IMR-90 (cell line): ENCODE measurements at regions of chr11 and their contacts with region 1.

Region 1: DNA sequence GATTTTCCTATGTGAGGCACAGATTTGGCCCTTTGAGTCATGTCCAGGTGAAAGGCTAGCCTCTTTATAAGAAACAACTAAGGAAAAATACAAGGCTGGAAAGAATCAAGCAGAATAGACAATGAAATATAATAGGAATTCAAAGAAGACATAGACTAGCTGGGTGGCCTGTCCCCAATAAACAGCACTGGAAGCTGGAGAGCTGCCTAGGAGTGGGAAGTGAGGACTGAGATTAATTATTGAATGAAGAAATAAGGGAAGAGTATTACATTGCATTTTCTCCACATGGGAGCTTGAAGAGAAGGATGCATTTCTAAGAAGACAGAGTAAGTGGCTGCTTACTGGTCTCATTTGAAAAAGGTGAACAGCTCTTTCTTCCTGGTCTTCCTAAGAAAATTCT is 100.0 kb downstream of the CCDC34 start:
- DNase-seq: no peak
- ATAC-seq: no peak
- H3K4me3 ChIP-seq: no peak overlapping the region
- H3K27ac ChIP-seq: no peak overlapping the region
- H3K4me1 ChIP-seq: no peaks in the 10 kb centered on the region
- H3K27me3 ChIP-seq: peaks cover 12% of the 10 kb centered on the region
- CTCF ChIP-seq: no peak
- POLR2A ChIP-seq: no peak
- RAD21 ChIP-seq: no peak

Region 2: GRCh38 chr11:27313157-27313821 is 50.2 kb after region 1 on chr11:
- CTCF ChIA-PET with region 1: no interaction called
- POLR2A ChIA-PET with region 1: no interaction called
- dilution Hi-C with region 1: no loop called
- in situ Hi-C with region 1: no loop called
- intact Hi-C with region 1: loop called (anchors 1 kb)
- DNase-seq: no peak
- ATAC-seq: peak; percentile 37
- H3K4me3 ChIP-seq: no peak overlapping the region
- H3K27ac ChIP-seq: no peak overlapping the region
- H3K4me1 ChIP-seq: no peaks in the 10 kb centered on the region
- H3K27me3 ChIP-seq: no peaks in the 10 kb centered on the region
- CTCF ChIP-seq: no peak
- POLR2A ChIP-seq: no peak
- RAD21 ChIP-seq: no peak